Activated B cell treated with CpG ODN at 0.5 μM for 24 hours (primary cell): ENCODE measurements at regions of chr9 and their contacts with region 1.

Region 1: GRCh38 chr9:136439550-136440408 is at the start of gene INPP5E:
- DNase-seq: peak; percentile 99
- ATAC-seq: peak; percentile 82
- H3K4me3 Mint-ChIP-seq: peak within 1 kb of the TSS; percentile 84
- H3K27ac Mint-ChIP-seq: peak within 1 kb of the TSS; percentile 53
- H3K4me1 Mint-ChIP-seq: peaks cover 26% of the 10 kb centered on the region
- H3K27me3 Mint-ChIP-seq: no peaks in the 10 kb centered on the region
- CTCF ChIP-seq: no peak
- total RNA-seq, gene INPP5E: 22.8 and 26.6 TPM in 2 replicates

Region 2: DNA sequence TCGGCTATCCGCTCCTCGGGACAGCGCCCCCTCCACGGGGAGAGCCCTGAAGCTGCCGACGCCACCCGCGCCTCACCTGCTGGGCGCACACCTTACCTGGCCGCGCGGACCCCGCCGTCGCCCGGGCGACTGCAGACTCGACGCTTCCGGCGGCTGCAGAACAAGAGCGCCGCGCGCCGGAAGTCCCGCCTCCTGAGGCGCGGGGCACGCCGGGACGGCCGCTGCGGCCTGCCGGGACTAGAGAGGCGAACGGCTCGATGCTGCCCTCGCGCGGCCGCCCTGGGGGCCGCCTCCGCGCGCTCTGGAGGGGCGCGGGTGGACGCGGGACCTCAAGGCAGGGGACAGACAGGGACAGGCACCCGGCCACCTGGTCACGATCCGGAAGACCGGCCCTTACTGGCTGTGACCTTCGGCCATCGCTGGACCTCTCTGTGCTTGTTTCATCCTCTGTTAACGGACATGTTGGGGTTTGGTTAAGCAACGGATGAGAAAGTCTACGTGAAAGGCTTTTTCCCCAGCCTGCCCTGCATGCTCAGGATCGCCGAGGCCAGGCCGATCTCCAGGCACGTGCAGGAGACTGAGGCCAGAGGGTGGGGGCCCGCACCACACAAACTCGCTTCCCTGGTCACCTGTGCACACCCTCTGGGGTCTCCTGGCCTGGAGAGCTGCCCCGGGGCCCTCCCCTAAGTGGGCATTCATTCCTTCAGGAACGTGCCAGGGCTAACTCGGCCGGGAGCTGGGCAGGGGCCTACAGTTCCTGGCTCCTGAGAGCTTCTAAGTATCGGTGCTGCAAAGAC is 39.5 kb before region 1 on chr9 and contains the start of gene SNAPC4:
- CTCF ChIA-PET with region 1: interaction called, 3 read pairs
- POLR2A ChIA-PET with region 1: interaction called, 8 read pairs
- intact Hi-C with region 1: loop called (anchors 1 kb)
- DNase-seq: peak; percentile 88
- ATAC-seq: peak; percentile 76
- H3K4me3 Mint-ChIP-seq: peak within 1 kb of the TSS; percentile 87
- H3K27ac Mint-ChIP-seq: peak within 1 kb of the TSS; percentile 46
- H3K4me1 Mint-ChIP-seq: peaks cover 48% of the 10 kb centered on the region
- H3K27me3 Mint-ChIP-seq: no peaks in the 10 kb centered on the region
- CTCF ChIP-seq: peak; percentile 21
- total RNA-seq, gene SNAPC4: 20.0 and 22.2 TPM in 2 replicates

Region 3: GRCh38 chr9:136410500-136411287 is 29.1 kb before region 1 on chr9 and contains the starts of genes ENTR1 and PMPCA:
- CTCF ChIA-PET with region 1: no interaction called
- POLR2A ChIA-PET with region 1: interaction called, 4 read pairs
- intact Hi-C with region 1: loop called (anchors 2 kb)
- DNase-seq: peak; percentile 98
- ATAC-seq: peak; percentile 87
- H3K4me3 Mint-ChIP-seq: peak within 1 kb of the TSS; percentile 92
- H3K27ac Mint-ChIP-seq: peak within 1 kb of the TSS; percentile 90
- H3K4me1 Mint-ChIP-seq: peaks cover 41% of the 10 kb centered on the region
- H3K27me3 Mint-ChIP-seq: no peaks in the 10 kb centered on the region
- CTCF ChIP-seq: no peak
- total RNA-seq, gene ENTR1: 89.4 and 101 TPM in 2 replicates
- total RNA-seq, gene PMPCA: 67.2 and 75.3 TPM in 2 replicates